Prostate gland (tissue), 2 donors: ENCODE measurements at regions of chr6 and their contacts with region 1.

Region 1: DNA sequence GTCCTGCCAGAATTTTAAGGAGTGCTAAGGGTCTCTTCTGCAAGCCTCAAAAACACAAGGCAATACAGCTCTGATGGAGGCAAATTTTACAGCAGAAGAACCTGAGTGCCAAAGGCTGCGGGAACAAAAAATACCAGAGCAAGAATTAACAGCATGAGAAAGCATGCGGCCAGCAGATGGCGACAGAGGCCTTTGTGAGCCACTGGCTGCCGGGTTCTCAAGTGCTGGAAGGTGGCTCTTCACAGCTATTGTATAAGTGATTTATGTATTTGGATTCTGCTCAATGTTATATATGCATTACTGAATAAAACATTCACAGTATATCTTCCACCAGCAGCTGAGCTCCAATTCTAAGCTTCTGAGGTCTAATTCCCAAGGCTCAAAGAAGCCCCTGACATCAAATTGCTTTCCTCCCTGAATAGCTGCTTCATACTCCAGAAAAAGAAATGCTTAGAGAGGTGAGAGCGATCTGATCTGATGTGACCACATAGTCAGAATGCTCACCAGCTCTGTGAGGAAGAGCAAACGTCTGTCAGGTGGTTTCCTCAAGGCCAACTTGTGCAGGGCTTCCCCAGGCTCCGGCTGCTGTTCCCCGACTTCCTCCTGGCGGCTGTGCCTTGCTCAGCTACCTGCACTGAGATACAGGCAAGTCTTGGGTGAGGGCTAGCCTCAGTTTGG is 58.6 kb downstream of the PPP1R3G start:
- DNase-seq: peak; percentile 84
- H3K4me3 ChIP-seq: no peak overlapping the region
- H3K27ac ChIP-seq: no peak overlapping the region
- H3K4me1 ChIP-seq: no peaks in the 10 kb centered on the region
- H3K27me3 ChIP-seq: no peaks in the 10 kb centered on the region
- CTCF ChIP-seq: peak; percentile 86 to 94 (median 88)
- POLR2A ChIP-seq: no peak

Region 2: DNA sequence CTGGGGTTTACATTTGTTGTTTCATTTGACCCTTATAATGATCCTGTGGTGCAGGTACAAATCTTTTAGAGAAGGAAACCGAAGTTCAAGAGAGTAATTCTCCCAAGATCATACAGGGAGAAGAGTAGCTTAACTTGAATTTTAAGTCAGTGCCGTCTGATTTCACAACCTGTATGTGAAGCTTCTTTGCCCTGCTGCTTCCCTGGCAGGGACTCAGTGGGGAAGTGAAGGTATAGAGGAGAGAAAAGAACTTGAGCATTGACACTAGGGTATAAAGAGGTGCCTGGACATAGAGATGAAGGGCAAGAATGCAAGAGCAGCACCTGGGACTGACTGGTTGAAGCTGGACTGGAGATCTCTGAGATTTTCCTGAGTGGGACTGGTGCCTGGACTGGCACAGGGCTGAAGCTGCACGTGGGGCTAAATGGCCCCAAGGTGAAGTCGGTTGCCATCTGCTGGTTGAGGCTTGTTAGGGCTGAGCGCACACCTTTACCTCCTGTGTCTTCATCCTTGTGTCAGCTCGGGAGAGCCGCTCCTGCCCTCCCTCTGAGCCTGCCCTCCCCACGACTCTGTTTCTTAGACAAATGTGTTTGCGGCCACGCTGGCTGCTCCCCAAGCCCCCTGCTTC is 159.3 kb after region 1 on chr6:
- intact Hi-C with region 1: loop called (anchors 2 kb)
- DNase-seq: peak; percentile 66
- H3K4me3 ChIP-seq: no peak overlapping the region
- H3K27ac ChIP-seq: no peak overlapping the region
- H3K4me1 ChIP-seq: no peaks in the 10 kb centered on the region
- H3K27me3 ChIP-seq: no peaks in the 10 kb centered on the region
- CTCF ChIP-seq: peak; percentile 33 to 71 (median 66)
- POLR2A ChIP-seq: no peak

Region 3: DNA sequence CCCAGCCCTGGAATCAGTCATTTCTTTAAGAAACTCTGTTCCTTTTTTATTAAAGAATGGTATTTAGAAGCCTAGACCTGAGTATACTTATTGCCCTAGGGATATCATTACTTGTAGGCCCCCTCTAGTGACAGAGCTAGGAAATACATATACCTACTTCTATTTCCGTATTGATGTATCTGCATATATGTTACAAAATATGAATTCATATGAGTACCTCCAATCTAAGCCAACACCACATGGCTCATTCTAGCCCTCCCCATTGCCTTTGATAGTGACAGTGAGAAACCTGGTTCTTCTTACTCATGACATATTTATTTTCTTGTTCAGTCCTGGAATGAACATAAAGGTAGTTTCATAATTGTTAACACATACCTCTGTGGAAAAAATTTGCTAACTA is 254.8 kb after region 1 on chr6:
- intact Hi-C with region 1: loop called (anchors 5 kb)
- DNase-seq: no peak
- H3K4me3 ChIP-seq: no peak overlapping the region
- H3K27ac ChIP-seq: no peak overlapping the region
- H3K4me1 ChIP-seq: no peaks in the 10 kb centered on the region
- H3K27me3 ChIP-seq: no peaks in the 10 kb centered on the region
- CTCF ChIP-seq: peak in 2 of 4 experiments; percentile 39 to 42
- POLR2A ChIP-seq: no peak

Region 4: GRCh38 chr6:5995949-5996713 is 852.4 kb after region 1 on chr6:
- intact Hi-C with region 1: loop called (anchors 10 kb)
- DNase-seq: no peak
- H3K4me3 ChIP-seq: peak overlapping the region; percentile 17 to 22
- H3K27ac ChIP-seq: no peak overlapping the region
- H3K4me1 ChIP-seq: no peaks in the 10 kb centered on the region
- H3K27me3 ChIP-seq: peaks cover 64% of the 10 kb centered on the region
- CTCF ChIP-seq: no peak
- POLR2A ChIP-seq: no peak

Region 5: DNA sequence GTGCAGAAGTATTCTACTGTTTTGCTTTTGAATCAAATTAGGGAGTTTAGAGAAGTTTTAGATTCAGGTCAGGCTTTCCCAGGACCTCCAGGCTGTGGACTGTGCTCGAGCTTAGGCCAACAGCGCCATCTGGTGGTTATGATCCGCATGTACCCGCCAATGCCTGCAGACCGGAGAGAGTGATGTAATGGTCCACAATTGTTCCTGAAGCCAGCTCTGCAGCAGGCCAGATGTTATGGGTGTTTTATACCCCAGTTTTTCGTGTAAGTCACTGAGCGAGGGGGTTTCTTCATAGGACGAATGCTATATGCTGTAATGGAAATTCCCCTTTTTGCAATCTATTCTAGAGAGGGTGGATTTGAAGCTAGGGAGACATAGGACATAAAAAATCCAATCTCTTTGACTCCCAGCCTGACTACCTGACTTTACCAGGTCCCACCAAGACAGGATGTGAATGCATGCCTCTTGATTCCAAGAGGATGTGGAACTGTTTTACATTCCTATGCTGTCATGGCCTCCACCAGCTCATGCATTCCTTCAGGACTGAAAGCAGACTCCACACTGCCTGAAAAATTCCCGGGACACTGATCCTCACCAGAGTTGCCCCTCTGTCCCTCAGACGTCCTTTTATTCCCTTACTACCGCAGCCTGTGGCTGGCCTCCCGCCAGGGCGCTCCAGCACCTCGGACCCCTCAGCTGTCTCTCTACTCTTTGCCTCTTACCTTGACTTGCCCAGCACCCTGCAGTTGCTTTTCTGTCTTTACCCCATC is 1403.5 kb after region 1 on chr6:
- intact Hi-C with region 1: loop called (anchors 5 kb)
- DNase-seq: peak; percentile 84
- H3K4me3 ChIP-seq: peak overlapping the region; percentile 23 to 27
- H3K27ac ChIP-seq: no peak overlapping the region
- H3K4me1 ChIP-seq: no peaks in the 10 kb centered on the region
- H3K27me3 ChIP-seq: peaks cover 3% of the 10 kb centered on the region
- CTCF ChIP-seq: peak; percentile 84 to 99 (median 92)
- POLR2A ChIP-seq: no peak